WTC11 (cell line): ENCODE measurements at regions of chr11 and their contacts with region 1.

Region 1: DNA sequence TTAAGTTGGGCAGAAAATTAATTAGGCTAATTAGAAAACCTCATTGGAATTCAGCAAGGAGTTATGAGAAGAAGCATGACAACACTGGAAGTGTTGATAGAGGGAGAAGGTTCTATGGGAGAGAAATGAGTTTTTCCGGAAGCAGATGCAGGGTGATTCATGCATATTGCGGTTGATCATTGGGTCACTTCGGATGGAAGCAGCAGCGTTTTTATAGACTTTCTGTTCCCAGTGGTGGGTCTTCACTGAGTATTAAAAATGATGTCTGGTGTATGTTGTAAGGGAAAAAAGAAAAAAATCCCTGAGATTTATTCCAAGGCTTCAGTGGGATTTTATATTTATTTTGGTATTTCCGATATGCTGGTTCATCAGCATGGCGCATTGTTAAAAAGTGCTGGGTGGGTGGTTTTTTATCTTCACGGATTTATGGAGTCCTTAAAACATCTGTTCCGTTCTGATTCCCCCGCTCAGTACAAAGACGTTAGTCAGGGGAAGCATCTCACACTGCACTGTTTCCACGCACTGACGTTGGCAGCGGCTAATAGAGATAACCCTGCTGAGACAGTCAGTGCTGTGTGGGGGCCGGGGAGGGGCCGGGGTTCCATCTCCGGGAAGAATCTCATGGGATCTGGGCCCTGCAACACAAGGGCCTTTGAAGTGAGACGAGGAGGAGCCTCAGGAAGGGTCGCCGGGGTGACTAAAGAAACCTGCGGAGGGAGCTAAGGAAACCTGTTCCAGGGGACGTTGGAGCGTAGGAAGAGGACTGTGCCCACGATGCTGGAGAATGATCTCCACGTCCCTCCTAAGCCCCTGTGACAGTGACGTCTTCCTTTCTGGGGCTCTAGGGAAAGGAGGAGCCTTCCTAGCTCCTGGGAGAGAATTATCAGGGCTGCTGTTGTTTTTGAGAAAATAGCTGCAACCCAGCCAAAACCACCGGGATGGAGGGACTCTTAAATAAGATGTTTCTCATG is 390.0 kb downstream of the NTM start:
- DNase-seq: peak; percentile 64
- ATAC-seq: peak; percentile 91
- H3K4me3 Mint-ChIP-seq: no peak overlapping the region
- H3K27ac Mint-ChIP-seq: no peak overlapping the region
- H3K4me1 Mint-ChIP-seq: peaks cover 20% of the 10 kb centered on the region
- H3K27me3 Mint-ChIP-seq: no peaks in the 10 kb centered on the region
- CTCF ChIP-seq: no peak

Region 2: GRCh38 chr11:131770801-131771200 is 10.4 kb after region 1 on chr11:
- CTCF ChIA-PET with region 1: interaction called, 16 read pairs
- POLR2A ChIA-PET with region 1: interaction called, 7 read pairs
- DNase-seq: no peak
- ATAC-seq: no peak
- H3K4me3 Mint-ChIP-seq: no peak overlapping the region
- H3K27ac Mint-ChIP-seq: no peak overlapping the region
- H3K4me1 Mint-ChIP-seq: peaks cover 13% of the 10 kb centered on the region
- H3K27me3 Mint-ChIP-seq: no peaks in the 10 kb centered on the region
- CTCF ChIP-seq: no peak

Region 3: GRCh38 chr11:131965504-131965903 is 205.1 kb after region 1 on chr11:
- CTCF ChIA-PET with region 1: no interaction called
- POLR2A ChIA-PET with region 1: no interaction called
- DNase-seq: no peak
- ATAC-seq: no peak
- H3K4me3 Mint-ChIP-seq: no peak overlapping the region
- H3K27ac Mint-ChIP-seq: no peak overlapping the region
- H3K4me1 Mint-ChIP-seq: peaks cover 10% of the 10 kb centered on the region
- H3K27me3 Mint-ChIP-seq: no peaks in the 10 kb centered on the region
- CTCF ChIP-seq: no peak